ENCODE measurements at regions of chr13 and their contacts with region 1.

Region 1: DNA sequence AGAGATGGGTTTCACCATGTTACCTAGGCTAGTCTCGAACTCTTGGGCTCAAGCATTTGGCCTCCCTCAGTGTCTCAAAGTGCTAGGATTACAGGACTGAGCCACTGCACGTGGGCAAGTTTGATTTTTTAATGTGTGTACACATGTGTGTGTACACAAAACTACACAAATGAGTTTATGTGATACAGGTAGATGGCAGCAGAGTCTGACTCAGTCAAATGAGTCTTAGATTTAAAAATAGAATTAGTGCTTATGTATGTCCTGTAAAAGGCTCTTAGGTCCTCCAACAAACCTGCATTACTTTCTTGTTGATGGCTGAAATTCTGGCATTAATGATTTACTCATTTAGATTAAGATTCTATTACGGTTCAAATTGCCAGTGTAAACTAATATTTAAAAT is 293.7 kb downstream of the PCDH17 start:
- DNase-seq: no peak
- H3K4me3 ChIP-seq: no peak overlapping the region
- H3K27ac ChIP-seq: no peak overlapping the region
- H3K4me1 ChIP-seq: no peaks in the 10 kb centered on the region
- H3K27me3 ChIP-seq: no peaks in the 10 kb centered on the region
- CTCF ChIP-seq: no peak
- POLR2A ChIP-seq: no peak

Region 2: DNA sequence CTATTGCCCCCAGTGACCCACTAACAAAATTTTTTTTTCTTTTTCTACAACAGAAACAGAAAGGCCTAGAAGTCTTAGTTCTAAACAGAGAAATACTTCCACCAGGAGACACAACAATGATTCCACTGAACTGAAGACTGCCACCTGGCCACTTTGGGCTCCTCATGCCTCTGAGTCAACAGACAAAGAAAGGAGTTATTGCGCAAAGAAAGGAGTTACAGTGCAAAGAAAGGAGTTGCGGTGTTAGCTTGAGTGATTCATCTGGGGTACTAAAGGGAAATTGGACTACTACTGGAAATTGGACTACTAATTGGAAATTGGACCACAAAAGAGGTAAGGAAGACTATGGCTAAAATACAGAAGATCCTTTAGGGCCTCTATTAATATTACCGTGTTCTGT is 177.2 kb before region 1 on chr13:
- intact Hi-C with region 1: no loop called
- DNase-seq: no peak
- H3K4me3 ChIP-seq: no peak overlapping the region
- H3K27ac ChIP-seq: no peak overlapping the region
- H3K4me1 ChIP-seq: no peaks in the 10 kb centered on the region
- H3K27me3 ChIP-seq: no peaks in the 10 kb centered on the region
- CTCF ChIP-seq: no peak
- POLR2A ChIP-seq: no peak

Region 3: DNA sequence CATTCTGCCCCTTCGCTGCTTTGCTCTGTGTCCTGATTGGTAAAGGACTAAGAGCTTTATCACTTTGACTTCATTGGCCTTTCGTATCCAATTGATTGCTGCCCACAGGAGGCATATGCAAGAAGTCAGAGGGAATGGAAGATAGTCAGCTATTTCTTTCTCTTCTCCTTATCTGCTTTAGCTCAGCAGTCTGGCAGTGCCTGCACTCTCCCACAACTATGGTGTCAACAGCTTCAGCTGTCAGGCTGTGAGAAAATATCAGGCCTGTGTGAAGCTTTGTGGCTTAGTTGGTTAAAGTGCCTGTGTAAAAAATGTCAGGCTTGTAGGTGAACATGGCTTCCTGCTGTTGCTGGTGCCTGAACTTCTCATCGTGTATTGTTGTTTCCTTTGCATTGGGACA is 50.7 kb before region 1 on chr13:
- intact Hi-C with region 1: loop called (anchors 5 kb)
- DNase-seq: no peak
- H3K4me3 ChIP-seq: no peak overlapping the region
- H3K27ac ChIP-seq: no peak overlapping the region
- H3K4me1 ChIP-seq: no peaks in the 10 kb centered on the region
- H3K27me3 ChIP-seq: no peaks in the 10 kb centered on the region
- CTCF ChIP-seq: no peak
- POLR2A ChIP-seq: no peak

Region 4: GRCh38 chr13:58376775-58377174 is 451.5 kb after region 1 on chr13:
- intact Hi-C with region 1: no loop called
- DNase-seq: no peak
- H3K4me3 ChIP-seq: no peak overlapping the region
- H3K27ac ChIP-seq: no peak overlapping the region
- H3K4me1 ChIP-seq: no peaks in the 10 kb centered on the region
- H3K27me3 ChIP-seq: no peaks in the 10 kb centered on the region
- CTCF ChIP-seq: no peak
- POLR2A ChIP-seq: no peak